ENCODE measurements at regions of chr12 and their contacts with region 1.

Region 1: DNA sequence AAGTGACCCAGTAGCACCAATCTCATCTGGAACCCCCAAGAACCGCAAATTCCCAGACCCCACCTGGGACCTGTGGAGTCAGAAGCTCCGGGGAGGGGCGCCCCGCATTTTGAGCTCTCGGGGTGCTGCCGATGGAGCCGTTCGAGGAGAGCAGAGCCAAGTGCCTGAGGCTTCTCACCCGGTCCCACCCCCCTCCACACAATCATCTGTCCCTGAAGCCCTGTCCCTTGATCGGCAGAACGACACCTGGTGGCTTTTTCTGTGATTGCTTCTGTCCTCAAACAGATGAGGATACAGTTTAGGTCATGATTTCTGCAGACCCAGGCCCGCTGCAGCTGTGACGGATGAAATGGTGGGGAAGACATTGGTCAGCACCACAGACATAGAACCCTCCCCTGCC is 74.7 kb downstream of the NOC4L start:
- DNase-seq: peak; percentile 62
- H3K4me3 Mint-ChIP-seq: no peak overlapping the region
- H3K27ac Mint-ChIP-seq: no peak overlapping the region
- H3K4me1 Mint-ChIP-seq: no peaks in the 10 kb centered on the region
- H3K27me3 Mint-ChIP-seq: peaks cover 74% of the 10 kb centered on the region
- CTCF ChIP-seq: peak; percentile 47

Region 2: DNA sequence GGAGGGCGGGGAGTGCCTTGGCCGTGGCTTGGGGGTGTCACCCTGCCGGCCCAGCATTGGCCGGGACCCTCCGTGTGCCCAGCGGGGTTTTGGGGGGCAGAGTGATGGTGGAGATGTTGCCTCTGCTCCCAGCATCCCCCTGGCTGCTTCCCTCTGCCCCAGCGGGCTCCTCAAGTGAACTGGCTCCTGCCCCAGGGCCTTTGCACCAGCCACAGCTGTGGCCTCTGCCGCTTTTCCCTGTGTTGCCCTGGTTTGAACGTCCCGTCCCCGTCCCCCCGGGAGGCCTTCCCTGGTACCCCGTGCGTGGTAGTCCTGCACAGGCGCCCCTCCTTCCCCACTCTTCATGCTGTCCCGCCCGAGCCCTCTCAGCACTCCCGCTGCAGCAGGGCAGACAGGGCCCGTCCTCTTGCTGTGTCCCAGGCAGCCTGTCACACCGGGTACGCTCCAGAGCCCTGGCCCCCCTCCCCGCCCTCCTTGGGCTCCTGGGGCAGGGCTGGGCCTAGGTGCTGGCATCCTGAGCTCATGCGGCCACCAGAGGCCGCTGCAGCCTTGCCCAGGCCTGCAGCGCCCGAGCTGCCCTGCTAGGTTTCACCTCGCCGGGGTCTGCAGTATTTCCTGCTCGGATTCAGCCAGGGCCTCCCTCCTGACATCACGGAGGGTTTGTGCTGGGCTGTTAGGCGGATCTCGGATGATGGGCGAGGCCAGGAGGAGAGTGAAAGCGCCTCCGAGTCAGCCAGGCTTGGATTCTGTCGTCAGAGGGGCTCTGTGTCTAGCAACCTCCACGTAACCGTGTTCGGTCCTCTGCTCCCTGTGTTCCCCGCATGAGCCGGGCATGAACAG is 65.2 kb before region 1 on chr12:
- CTCF ChIA-PET with region 1: interaction called, 20 read pairs
- intact Hi-C with region 1: loop called (anchors 2 kb)
- DNase-seq: peak; percentile 90
- H3K4me3 Mint-ChIP-seq: peak overlapping the region; percentile 50
- H3K27ac Mint-ChIP-seq: no peak overlapping the region
- H3K4me1 Mint-ChIP-seq: no peaks in the 10 kb centered on the region
- H3K27me3 Mint-ChIP-seq: no peaks in the 10 kb centered on the region
- CTCF ChIP-seq: peak; percentile 91

Region 3: DNA sequence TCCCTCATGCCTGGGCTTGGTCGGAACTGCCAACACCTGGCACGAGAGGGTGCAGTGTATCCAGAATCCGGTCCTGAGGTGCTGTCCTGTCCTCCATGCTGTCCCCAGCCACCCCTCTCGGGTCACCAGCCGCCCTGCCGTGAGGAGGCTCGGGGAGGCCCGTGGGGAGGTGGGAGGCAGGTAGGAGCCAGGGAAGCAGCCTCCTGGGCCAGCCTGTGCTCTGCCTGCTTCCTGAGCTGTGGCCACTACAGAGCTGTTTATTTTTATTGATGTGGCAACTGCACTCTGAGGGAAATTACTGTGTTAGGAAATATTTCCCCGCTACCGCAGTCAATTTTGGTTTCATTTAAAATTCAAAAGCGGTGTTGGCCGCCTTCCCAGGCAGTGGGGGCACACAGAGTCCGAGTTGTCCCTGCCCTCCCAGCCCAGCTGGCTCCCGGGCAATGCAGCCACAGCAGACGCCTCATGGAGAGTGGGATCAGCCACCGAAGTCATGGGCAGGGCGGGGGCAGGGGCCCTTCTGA is 56.3 kb before region 1 on chr12:
- CTCF ChIA-PET with region 1: interaction called, 7 read pairs
- intact Hi-C with region 1: loop called (anchors 2 kb)
- DNase-seq: peak; percentile 50
- H3K4me3 Mint-ChIP-seq: no peak overlapping the region
- H3K27ac Mint-ChIP-seq: no peak overlapping the region
- H3K4me1 Mint-ChIP-seq: peaks cover 16% of the 10 kb centered on the region
- H3K27me3 Mint-ChIP-seq: peaks cover 69% of the 10 kb centered on the region
- CTCF ChIP-seq: no peak

Region 4: DNA sequence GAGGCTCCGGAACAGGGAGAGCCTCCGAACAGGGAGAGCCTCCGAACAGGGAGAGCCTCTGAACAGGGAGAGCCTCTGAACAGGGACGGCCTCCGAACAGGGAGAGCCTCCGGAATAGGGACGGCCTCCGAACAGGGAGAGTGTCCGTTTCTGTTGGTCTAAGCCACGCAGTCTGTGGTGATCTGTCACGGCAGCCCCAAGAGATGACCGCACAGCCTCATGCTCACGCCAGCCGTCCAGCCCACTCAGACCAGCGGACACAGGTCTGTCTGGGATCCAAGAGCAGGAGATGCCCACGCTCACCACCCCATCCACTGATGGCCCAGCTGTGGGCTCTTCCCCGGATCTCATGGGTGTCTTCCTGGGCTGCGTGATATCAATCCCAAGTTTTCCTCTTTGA is 77.1 kb after region 1 on chr12:
- CTCF ChIA-PET with region 1: interaction called, 10 read pairs
- intact Hi-C with region 1: no loop called
- DNase-seq: no peak
- H3K4me3 Mint-ChIP-seq: no peak overlapping the region
- H3K27ac Mint-ChIP-seq: no peak overlapping the region
- H3K4me1 Mint-ChIP-seq: no peaks in the 10 kb centered on the region
- H3K27me3 Mint-ChIP-seq: no peaks in the 10 kb centered on the region
- CTCF ChIP-seq: no peak

Region 5: DNA sequence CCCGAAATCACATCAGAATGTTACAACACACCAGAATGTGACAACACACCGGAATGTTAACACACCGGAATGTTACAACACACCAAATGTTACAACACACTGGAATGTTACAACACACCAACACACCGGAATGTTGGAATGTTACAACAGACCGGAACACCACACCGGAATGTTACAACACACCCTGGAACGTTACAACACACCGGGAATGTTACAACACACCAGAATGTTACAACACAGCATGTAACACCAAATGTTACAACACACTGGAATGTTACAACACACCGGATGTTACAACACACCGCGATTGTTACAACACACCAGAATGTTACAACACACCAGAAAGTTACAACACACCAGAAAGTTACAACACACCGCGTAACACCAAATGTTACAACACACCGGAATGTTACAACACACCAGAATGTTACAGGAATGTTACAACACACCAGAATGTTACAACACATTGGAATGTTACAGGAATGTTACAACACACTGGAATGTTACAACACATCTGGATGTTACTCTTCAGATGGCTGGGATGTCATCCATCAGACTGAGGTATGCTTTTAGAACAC is 647.4 kb after region 1 on chr12:
- CTCF ChIA-PET with region 1: no interaction called
- intact Hi-C with region 1: no loop called
- DNase-seq: no peak
- H3K4me3 Mint-ChIP-seq: no peak overlapping the region
- H3K27ac Mint-ChIP-seq: no peak overlapping the region
- H3K4me1 Mint-ChIP-seq: no peaks in the 10 kb centered on the region
- H3K27me3 Mint-ChIP-seq: no peaks in the 10 kb centered on the region
- CTCF ChIP-seq: no peak

Region 6: GRCh38 chr12:132946246-132946820 is 727.4 kb after region 1 on chr12:
- CTCF ChIA-PET with region 1: no interaction called
- intact Hi-C with region 1: no loop called
- DNase-seq: no peak
- H3K4me3 Mint-ChIP-seq: no peak overlapping the region
- H3K27ac Mint-ChIP-seq: no peak overlapping the region
- H3K4me1 Mint-ChIP-seq: no peaks in the 10 kb centered on the region
- H3K27me3 Mint-ChIP-seq: no peaks in the 10 kb centered on the region
- CTCF ChIP-seq: no peak